A549 (cell line): ENCODE measurements at regions of chr2 and their contacts with region 1.

Region 1: DNA sequence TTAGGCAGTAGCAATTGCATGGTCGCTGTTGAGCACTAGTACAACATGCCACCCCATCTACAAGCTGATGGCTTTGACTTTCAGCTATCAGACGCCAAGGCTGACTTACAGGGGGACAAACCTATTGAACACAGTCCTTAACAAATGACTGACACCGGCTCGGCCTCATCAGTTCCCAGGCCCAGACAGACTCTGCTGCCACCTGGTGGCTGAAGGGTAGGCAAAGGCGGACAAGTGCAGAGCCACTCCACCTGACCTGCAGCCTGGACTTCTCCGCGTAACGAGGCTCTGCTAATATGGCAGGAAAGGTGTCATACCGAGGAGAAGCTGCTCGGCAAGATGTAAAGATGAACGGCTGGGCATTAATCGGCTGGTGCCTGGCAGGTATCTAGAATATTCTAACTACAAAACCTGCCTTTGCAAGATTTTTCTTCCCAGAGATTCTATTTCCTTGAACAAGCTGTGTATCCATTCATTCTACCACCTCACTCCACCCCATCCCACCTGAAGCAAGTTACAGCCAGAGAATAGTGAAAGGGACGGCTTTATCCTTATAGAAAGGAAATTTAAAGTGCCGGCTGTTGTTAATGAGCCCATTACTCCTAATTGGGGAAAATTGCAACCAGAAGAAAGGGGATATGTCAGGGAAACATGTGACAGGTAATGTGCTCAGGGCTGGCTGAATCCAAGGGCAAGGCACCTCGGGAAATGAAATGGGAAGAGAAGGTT is 67.4 kb downstream of the STEAP3 start:
- DNase-seq: peak; percentile 73 to 76
- ATAC-seq: peak; percentile 97 to 99
- H3K4me3 ChIP-seq: no peak overlapping the region
- H3K27ac ChIP-seq: no peak overlapping the region
- H3K4me1 ChIP-seq: no peaks in the 10 kb centered on the region
- CTCF ChIP-seq: peak; percentile 83
- EP300 ChIP-seq: no peak
- POLR2A ChIP-seq: no peak
- RAD21 ChIP-seq: peak; percentile 85 to 92

Region 2: DNA sequence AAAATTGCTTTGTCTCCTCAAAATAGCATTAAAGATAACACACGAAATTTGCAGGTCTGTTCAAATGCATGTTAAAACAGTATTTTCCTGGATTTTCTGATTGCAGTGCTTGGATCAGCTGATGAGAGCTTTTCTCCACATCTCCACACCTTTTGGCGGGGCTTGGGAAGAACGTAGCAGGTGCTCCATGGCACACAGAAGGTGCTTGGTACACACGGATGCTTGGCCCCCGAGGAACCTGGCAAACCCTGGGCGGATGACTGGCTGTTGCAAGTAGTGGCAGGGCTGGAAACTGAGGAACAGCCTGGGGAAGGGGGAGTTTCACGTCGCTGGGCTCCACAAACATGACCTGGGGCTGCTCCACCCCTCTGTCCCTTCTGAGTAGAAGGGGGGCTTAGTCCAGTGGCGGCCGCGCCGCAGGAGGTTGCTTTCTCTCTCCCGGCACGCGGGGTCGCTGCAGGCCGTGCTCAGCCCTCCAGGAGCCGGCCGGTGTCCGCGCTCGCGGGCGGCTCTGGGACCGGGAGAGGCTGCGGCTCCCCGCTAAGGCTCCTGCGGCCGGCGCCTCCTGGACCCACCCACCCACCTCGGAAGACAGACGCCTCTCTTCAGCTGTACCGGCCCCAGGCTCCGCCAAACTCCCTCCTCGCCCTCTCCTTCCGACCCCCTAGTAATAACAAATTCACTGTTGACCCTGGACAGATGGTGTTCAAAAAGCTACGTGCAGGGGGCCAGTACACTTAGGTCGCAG is 279.7 kb before region 1 on chr2:
- CTCF ChIA-PET with region 1: interaction called, 61 read pairs
- POLR2A ChIA-PET with region 1: no interaction called
- DNase-seq: peak; percentile 49 to 51
- ATAC-seq: peak; percentile 95 to 98
- H3K4me3 ChIP-seq: 0 out of 3 replicates have a peak overlapping the region, but pooled peaks have one; percentile 27
- H3K27ac ChIP-seq: 0 out of 6 replicates have a peak overlapping the region, but pooled peaks of 1 of the 2 experiments have one; percentile 48
- H3K4me1 ChIP-seq: no peaks in the 10 kb centered on the region
- CTCF ChIP-seq: peak; percentile 68
- EP300 ChIP-seq: no peak
- POLR2A ChIP-seq: no peak
- RAD21 ChIP-seq: peak; percentile 72 to 87

Region 3: GRCh38 chr2:119218478-119219064 is 72.5 kb before region 1 on chr2:
- CTCF ChIA-PET with region 1: interaction called, 30 read pairs
- POLR2A ChIA-PET with region 1: no interaction called
- DNase-seq: peak in 1 of 2 experiments; percentile 26
- ATAC-seq: no peak
- H3K4me3 ChIP-seq: no peak overlapping the region
- H3K27ac ChIP-seq: peak overlapping the region in 1 of 2 experiments; percentile 49; a peak in 2 of 6 replicates
- H3K4me1 ChIP-seq: peaks cover 11% of the 10 kb centered on the region
- CTCF ChIP-seq: peak; percentile 12; the same call in 1 of the 3 replicates
- EP300 ChIP-seq: no peak
- POLR2A ChIP-seq: no peak
- RAD21 ChIP-seq: peak; percentile 39 to 61; a peak in 4 of 5 replicates

Region 4: DNA sequence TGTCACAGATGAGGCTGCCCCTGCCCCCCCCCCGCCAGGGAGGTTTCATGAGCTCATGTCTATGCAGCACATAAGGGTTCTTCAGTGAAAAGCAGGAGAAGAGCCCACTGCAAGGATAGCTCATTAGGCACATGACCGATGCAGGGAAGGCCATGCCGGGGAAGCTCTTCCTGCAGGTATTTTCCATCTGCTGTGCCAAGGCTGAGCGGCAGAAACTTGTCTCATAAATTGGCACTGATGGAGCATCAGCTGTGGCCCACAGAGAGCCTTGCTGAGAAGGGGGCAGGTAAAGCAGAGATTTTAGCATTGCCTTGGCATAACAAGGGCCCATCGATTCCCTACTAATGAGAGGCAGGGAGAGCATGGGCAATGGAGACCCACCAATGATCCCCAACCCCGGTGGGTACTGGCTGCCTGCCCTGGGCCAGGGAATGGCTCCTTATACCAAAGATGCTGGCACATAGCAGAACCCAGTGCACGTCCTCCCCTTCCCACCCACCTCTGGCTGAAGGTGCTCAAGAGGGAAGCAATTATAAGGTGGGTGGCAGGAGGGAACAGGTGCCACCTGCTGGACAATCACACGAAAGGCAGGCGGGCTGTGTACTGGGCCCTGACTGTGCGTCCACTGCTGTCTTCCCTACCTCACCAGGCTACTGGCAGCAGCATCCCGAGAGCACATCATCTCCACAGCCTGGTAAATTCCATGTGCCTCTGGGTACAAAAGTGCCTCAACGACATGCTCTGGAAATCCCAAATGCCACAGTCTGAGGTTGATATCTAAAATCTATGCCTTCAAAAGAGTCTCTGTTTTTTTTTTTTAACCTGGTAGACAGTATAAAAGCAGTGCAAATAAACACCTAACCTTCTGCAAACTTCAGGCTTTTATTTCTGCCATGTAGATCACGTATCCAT is 26.0 kb before region 1 on chr2:
- CTCF ChIA-PET with region 1: interaction called, 25 read pairs
- POLR2A ChIA-PET with region 1: no interaction called
- DNase-seq: peak; percentile 49 to 60
- ATAC-seq: peak; percentile 95 to 99
- H3K4me3 ChIP-seq: no peak overlapping the region
- H3K27ac ChIP-seq: no peak overlapping the region
- H3K4me1 ChIP-seq: no peaks in the 10 kb centered on the region
- CTCF ChIP-seq: peak; percentile 84
- EP300 ChIP-seq: no peak
- POLR2A ChIP-seq: no peak
- RAD21 ChIP-seq: peak; percentile 85 to 86

Region 5: GRCh38 chr2:119311356-119311755 is 20.3 kb after region 1 on chr2:
- CTCF ChIA-PET with region 1: interaction called, 20 read pairs
- POLR2A ChIA-PET with region 1: no interaction called
- DNase-seq: no peak
- ATAC-seq: no peak
- H3K4me3 ChIP-seq: no peak overlapping the region
- H3K27ac ChIP-seq: no peak overlapping the region
- H3K4me1 ChIP-seq: no peaks in the 10 kb centered on the region
- CTCF ChIP-seq: no peak
- EP300 ChIP-seq: no peak
- POLR2A ChIP-seq: no peak
- RAD21 ChIP-seq: no peak

Region 6: DNA sequence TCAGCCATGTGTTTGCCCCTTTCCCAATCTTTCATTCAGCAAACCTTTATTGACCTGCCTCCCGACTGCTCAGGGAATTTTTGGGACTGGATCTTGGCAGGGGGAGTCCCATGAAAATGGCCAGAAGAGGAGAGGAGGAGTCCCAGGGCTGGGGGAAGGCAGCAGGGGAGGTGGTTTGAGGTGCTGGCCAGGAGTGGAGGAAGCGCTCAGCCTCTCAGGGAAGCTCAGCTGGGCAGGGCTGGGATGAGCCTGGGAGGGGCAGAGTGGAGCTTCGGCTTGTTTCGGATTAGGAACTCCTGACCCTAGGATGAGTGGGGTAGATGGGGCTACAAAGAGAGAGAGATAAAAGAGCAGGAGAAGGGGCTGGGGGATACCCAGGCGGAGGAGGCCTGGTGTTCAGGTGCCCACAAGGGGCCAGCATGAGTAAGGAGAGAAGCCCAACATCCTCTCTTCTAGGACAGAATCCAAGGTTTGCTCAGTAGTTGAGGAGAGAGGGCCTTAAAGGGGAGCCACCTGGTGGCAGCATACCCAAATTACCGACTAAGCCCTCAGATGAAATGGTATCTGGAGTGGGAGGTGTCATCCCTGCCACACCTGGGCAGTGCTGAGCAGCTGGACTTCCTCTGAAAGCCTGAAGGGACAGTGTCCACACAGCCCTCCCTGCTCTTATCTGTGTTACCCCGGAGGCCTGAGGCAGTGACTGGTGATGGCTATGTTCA is 1146.0 kb after region 1 on chr2:
- CTCF ChIA-PET with region 1: no interaction called
- POLR2A ChIA-PET with region 1: no interaction called
- DNase-seq: peak; percentile 72 to 83
- ATAC-seq: peak; percentile 67 to 91
- H3K4me3 ChIP-seq: no peak overlapping the region
- H3K27ac ChIP-seq: peak overlapping the region; percentile 56 to 64
- H3K4me1 ChIP-seq: peaks cover 15% of the 10 kb centered on the region
- CTCF ChIP-seq: peak; percentile 69
- EP300 ChIP-seq: no peak
- POLR2A ChIP-seq: no peak
- RAD21 ChIP-seq: peak; percentile 73